Heart right ventricle (tissue), 16 donors: ENCODE measurements at regions of chr14 and their contacts with region 1.

Region 1: GRCh38 chr14:49862089-49862673 is 9.6 kb upstream of the NEMF start:
- DNase-seq: peak; percentile 72 to 86
- ATAC-seq: peak; percentile 38 to 73 (median 55)
- H3K4me3 ChIP-seq: peak overlapping the region; percentile 48 to 92 (median 64)
- H3K27ac ChIP-seq: peak overlapping the region; percentile 93 to 98 (median 96)
- H3K4me1 ChIP-seq: peaks cover 0 to 43% (median 15%) of the 10 kb centered on the region in 9 donors
- H3K27me3 ChIP-seq: no peaks in the 10 kb centered on the region
- CTCF ChIP-seq: peak in 7 of 9 donors; percentile 100

Region 2: DNA sequence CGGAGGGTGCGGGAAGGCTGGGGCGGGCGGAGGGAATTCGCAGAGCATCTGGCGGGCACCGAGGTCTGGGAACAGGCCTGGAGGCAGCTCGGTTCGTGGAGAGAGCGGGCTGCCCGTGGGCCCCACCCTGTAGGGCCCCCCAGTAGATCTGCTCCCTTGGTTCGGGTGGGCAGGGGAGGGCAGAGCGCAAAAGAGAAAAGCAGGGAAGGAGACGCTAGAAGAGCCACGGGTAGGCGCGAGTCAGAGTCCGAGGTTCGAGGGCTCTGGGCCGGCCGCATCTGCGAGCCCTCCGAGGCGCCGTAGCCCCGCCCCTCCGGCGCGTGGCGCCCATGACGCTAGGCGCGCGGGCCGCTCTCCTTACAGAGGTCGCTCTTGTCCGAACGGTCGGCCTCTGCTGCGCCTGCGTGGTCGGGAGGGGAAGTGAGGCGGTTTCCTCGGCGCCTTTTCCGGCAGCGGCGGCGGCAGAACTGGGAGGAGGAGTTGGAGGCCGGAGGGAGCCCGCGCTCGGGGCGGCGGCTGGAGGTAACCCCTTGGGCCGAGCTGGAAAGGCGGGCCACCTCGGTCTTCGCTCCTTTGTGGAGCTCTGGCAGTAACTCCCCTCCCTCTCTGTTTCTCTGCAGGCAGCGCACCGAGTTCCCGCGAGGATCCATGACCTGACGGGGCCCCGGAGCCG is 30.6 kb after region 1 on chr14 and contains the start of gene ARF6:
- intact Hi-C with region 1: loop called in 1 of 10 experiments (anchors 2 kb)
- DNase-seq: peak; percentile 99 to 100
- ATAC-seq: peak; percentile 97 to 100 (median 99)
- H3K4me3 ChIP-seq: peak within 1 kb of the TSS; percentile 82 to 100 (median 94)
- H3K27ac ChIP-seq: peak within 1 kb of the TSS; percentile 98 to 100 (median 100)
- H3K4me1 ChIP-seq: peaks cover 7 to 45% (median 40%) of the 10 kb centered on the region in 9 donors
- H3K27me3 ChIP-seq: no peaks in the 10 kb centered on the region
- CTCF ChIP-seq: peak in 5 of 9 donors; percentile 9 to 45 (median 28)
- total RNA-seq, gene ARF6: 19.0 to 40.5 (median 25.5) TPM

Region 3: GRCh38 chr14:50116181-50116956 is 254.2 kb after region 1 on chr14 and contains the start of gene VCPKMT:
- intact Hi-C with region 1: loop called in 1 of 10 experiments (anchors 1 kb)
- DNase-seq: peak; percentile 93 to 96
- ATAC-seq: peak; percentile 99 to 100 (median 100)
- H3K4me3 ChIP-seq: peak within 1 kb of the TSS; percentile 64 to 88 (median 76)
- H3K27ac ChIP-seq: peak within 1 kb of the TSS; percentile 25 to 93 (median 82)
- H3K4me1 ChIP-seq: peaks cover 7 to 27% (median 20%) of the 10 kb centered on the region in 9 donors
- H3K27me3 ChIP-seq: no peaks in the 10 kb centered on the region
- CTCF ChIP-seq: no peak
- total RNA-seq, gene VCPKMT: 1.9 to 4.7 (median 3.0) TPM

Region 4: GRCh38 chr14:50225067-50225973 is 363.1 kb after region 1 on chr14:
- intact Hi-C with region 1: loop called in 1 of 10 experiments (anchors 5 kb)
- DNase-seq: peak in 1 of 2 donors; percentile 51
- ATAC-seq: peak; percentile 82 to 93 (median 91)
- H3K4me3 ChIP-seq: peak overlapping the region in 2 of 10 donors; percentile 5
- H3K27ac ChIP-seq: peak overlapping the region in 9 of 10 donors; percentile 28 to 77 (median 55)
- H3K4me1 ChIP-seq: peaks cover 9 to 91% (median 66%) of the 10 kb centered on the region in 9 donors
- H3K27me3 ChIP-seq: no peaks in the 10 kb centered on the region
- CTCF ChIP-seq: no peak